Endothelial cell of umbilical vein (primary cell): ENCODE measurements at regions of chr12 and their contacts with region 1.

Region 1: GRCh38 chr12:57621497-57622292 is 10.5 kb downstream of the ARHGEF25 start:
- DNase-seq: peak; percentile 52
- H3K4me3 ChIP-seq: peak overlapping the region in 1 of 3 experiments; percentile 14
- H3K27ac ChIP-seq: no peak overlapping the region
- H3K4me1 ChIP-seq: peaks cover 5% of the 10 kb centered on the region
- H3K27me3 ChIP-seq: peaks cover 59 to 62% of the 10 kb centered on the region in 2 experiments
- CTCF ChIP-seq: peak; percentile 94 to 98
- POLR2A ChIP-seq: no peak

Region 2: DNA sequence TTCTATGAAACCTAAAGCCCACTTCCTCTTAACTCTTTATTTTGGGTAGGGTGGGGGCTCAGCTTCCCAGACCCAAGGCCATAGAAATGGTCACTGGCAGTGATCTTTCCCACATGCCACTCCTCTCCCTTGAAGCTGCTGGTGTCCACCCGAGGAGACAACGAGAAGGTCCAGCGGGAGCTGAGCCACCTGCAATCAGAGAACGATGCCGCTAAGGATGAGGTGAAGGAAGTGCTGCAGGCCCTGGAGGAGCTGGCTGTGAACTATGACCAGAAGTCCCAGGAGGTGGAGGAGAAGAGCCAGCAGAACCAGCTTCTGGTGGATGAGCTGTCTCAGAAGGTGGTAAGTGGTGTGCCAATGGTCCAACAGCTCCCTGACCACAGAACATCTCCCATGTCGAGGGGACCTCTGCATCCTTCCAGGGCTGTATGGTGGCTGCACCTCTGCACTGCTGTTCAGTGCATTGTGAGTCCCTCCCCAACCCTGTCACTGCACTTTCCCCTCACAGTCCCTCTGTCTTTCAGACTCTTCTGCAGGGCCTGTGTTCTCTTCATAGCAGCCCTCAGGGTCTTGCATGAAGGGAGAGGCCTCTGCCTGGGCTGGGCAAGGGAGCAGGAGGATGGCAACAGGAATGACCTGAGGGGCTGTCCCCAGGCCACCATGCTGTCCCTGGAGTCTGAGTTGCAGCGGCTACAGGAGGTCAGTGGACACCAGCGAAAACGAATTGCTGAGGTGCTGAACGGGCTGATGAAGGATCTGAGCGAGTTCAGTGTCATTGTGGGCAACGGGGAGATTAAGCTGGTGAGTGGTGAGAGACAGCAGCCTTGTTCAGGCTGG is 49.6 kb before region 1 on chr12:
- CTCF ChIA-PET with region 1: no interaction called
- POLR2A ChIA-PET with region 1: no interaction called
- dilution Hi-C with region 1: no loop called
- intact Hi-C with region 1: no loop called
- DNase-seq: no peak
- H3K4me3 ChIP-seq: no peak overlapping the region
- H3K27ac ChIP-seq: no peak overlapping the region
- H3K4me1 ChIP-seq: no peaks in the 10 kb centered on the region
- H3K27me3 ChIP-seq: peaks cover 3 to 6% of the 10 kb centered on the region in 2 experiments
- CTCF ChIP-seq: no peak
- POLR2A ChIP-seq: no peak

Region 3: DNA sequence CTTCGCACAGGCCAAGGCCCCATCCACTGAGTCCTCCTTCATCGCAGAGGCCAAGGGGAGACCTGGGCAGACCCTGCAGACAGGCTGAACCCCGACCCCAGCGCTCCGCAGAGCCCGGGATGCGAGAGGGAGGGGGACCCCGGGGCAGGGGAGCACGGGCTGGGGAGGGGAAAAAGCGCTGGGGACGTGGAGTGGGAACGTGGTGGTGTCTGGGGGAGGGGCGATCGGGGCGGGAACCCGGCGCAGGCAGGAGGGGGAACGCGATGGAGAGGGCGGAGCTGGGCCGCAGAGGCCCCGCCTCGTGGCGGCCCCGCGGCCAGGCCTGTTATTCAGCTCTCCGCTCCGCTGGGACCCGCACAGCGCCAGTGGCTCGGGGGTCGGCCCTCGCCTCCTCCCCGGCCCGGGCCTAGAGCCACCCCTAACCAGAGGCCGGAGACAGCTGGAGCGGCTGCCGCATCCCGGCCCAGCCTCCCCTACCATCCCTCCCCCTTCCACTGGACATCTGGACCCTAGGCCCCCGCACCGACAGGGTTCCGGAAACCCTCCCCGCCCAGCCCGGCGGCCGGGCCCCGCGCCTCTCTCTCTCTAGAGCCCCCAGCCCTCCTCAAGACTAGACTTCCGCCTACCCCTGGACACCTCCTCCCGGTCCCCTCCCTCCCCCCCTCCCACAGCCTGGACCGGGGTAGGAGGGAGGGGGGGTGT is 10.4 kb before region 1 on chr12 and contains the start of gene ARHGEF25:
- CTCF ChIA-PET with region 1: interaction called, 10 read pairs
- POLR2A ChIA-PET with region 1: no interaction called
- dilution Hi-C with region 1: no loop called
- intact Hi-C with region 1: no loop called
- DNase-seq: peak; percentile 24
- H3K4me3 ChIP-seq: peak within 1 kb of the TSS; percentile 46 to 67 (median 54)
- H3K27ac ChIP-seq: no peak within 1 kb of the TSS
- H3K4me1 ChIP-seq: peaks cover 3% of the 10 kb centered on the region
- H3K27me3 ChIP-seq: peaks cover 5 to 12% of the 10 kb centered on the region in 2 experiments
- CTCF ChIP-seq: no peak
- POLR2A ChIP-seq: peak; percentile 56
- total RNA-seq, gene ARHGEF25: 4.7 and 7.4 TPM in 2 replicates

Region 4: GRCh38 chr12:57632694-57633477 is 11.2 kb after region 1 on chr12 and contains the start of gene B4GALNT1:
- CTCF ChIA-PET with region 1: interaction called, 11 read pairs
- POLR2A ChIA-PET with region 1: no interaction called
- dilution Hi-C with region 1: no loop called
- intact Hi-C with region 1: loop called (anchors 1 kb)
- DNase-seq: peak; percentile 61
- H3K4me3 ChIP-seq: peak within 1 kb of the TSS in 2 of 3 experiments; percentile 24 to 36
- H3K27ac ChIP-seq: no peak within 1 kb of the TSS
- H3K4me1 ChIP-seq: no peaks in the 10 kb centered on the region
- H3K27me3 ChIP-seq: peaks cover 27 to 42% of the 10 kb centered on the region in 2 experiments
- CTCF ChIP-seq: peak; percentile 84 to 94
- POLR2A ChIP-seq: no peak
- total RNA-seq, gene B4GALNT1: 0.25 and 0.35 TPM in 2 replicates